GM12878 (cell line): ENCODE measurements at regions of chr10 and their contacts with region 1.

Region 1: DNA sequence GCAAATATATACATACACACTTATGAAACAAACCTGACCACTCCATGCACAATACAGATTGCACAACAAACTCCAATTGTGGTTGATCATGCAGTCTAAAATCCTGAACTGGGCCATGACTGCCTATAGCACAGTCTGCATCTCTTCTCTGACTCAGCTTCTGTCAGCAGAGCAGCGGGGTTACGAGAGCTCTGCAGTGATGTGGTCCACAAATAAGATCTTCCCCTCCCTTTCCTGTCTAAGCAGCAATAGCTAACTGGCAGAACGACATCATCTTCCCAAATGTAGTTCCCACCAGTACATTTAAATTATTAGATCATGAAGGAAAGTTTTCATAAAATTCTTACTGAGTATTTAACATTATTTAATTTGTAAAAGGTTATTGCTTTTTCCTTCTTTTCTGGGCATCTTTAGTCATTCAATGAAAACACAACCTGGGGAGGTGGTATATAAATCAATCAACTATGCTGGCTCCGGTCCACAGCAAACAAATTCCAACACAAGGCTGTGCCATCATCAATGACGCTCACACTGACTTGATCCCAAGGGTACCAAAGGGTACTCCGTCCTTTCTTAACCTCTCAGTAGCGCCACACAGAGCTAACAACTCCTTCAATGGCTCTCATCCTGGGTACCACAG is 17.1 kb downstream of the ARHGAP21 start:
- DNase-seq: no peak
- ATAC-seq: peak; percentile 81
- H3K4me3 ChIP-seq: no peak overlapping the region
- H3K27ac ChIP-seq: no peak overlapping the region
- H3K4me1 ChIP-seq: peaks cover 9% of the 10 kb centered on the region; the same call in 1 of the 2 replicates
- H3K27me3 ChIP-seq: no peaks in the 10 kb centered on the region
- CTCF ChIP-seq: no peak
- EP300 ChIP-seq: no peak
- POLR2A ChIP-seq: no peak
- RAD21 ChIP-seq: no peak

Region 2: GRCh38 chr10:24652381-24652957 is 54.1 kb before region 1 on chr10:
- CTCF ChIA-PET with region 1: interaction called, 3 read pairs
- POLR2A ChIA-PET with region 1: interaction called, 6 read pairs
- RAD21 ChIA-PET with region 1: interaction called, 3 read pairs
- SMC1A ChIA-PET with region 1: interaction called, 14 read pairs
- in situ Hi-C with region 1: no loop called
- intact Hi-C with region 1: loop called (anchors 5 kb)
- DNase-seq: peak; percentile 62
- ATAC-seq: peak; percentile 93
- H3K4me3 ChIP-seq: peak overlapping the region; percentile 46
- H3K27ac ChIP-seq: peak overlapping the region; percentile 76
- H3K4me1 ChIP-seq: peaks cover 15% of the 10 kb centered on the region
- H3K27me3 ChIP-seq: no peaks in the 10 kb centered on the region
- CTCF ChIP-seq: no peak
- EP300 ChIP-seq: peak; percentile 42 to 82; a peak in 3 of 4 replicates
- POLR2A ChIP-seq: no peak
- RAD21 ChIP-seq: no peak

Region 3: DNA sequence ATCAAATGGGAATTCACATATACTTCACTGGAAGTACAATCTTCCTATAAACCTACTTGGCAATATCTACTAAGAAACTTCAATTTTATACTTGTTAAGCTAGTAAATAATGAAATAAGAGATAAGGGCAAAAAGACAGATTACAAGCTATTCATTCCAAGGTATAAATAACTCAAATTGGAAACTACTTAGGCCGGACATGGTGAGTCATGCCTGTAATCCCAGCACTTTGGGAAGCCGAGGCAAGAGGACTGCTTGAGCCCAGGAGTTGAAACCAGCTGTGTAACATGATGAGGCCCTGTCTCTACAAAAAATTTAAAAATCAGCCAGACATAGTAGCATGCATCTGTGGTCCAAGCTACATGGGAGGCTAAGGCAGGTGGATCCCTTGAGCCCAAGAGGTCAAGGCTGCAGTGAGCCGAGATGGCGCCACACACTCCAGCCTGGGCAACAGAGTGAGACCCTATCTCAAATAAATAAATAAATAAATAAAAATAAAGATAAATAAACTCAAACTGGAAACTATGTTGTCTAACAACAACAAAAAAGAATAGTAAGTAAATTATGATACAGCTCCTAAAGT is 20.6 kb before region 1 on chr10:
- CTCF ChIA-PET with region 1: no interaction called
- POLR2A ChIA-PET with region 1: interaction called, 16 read pairs
- RAD21 ChIA-PET with region 1: interaction called, 3 read pairs
- SMC1A ChIA-PET with region 1: interaction called, 40 read pairs
- in situ Hi-C with region 1: no loop called
- intact Hi-C with region 1: no loop called
- DNase-seq: no peak
- ATAC-seq: no peak
- H3K4me3 ChIP-seq: no peak overlapping the region
- H3K27ac ChIP-seq: no peak overlapping the region
- H3K4me1 ChIP-seq: no peaks in the 10 kb centered on the region
- H3K27me3 ChIP-seq: no peaks in the 10 kb centered on the region
- CTCF ChIP-seq: no peak
- EP300 ChIP-seq: no peak
- POLR2A ChIP-seq: no peak
- RAD21 ChIP-seq: no peak

Region 4: DNA sequence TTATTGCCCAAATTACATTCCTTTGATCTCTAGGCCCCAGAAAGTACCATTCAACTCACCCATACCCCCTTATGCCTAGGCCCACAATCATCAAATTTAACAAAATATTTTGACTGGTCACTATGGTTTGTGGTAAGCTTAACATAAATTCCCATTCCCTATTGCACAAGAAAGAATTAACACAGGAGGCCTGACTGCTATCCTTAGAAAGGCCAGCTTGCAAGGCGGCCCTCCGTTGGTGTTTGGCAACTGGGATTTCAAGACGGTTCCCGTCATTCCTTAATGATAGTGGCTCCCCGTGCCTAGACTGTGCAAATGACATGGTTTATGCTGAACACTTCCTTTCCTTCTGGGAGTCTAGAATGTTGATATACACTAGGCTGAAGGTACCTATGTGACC is 12.5 kb before region 1 on chr10:
- CTCF ChIA-PET with region 1: interaction called, 4 read pairs
- POLR2A ChIA-PET with region 1: interaction called, 16 read pairs
- RAD21 ChIA-PET with region 1: interaction called, 6 read pairs
- SMC1A ChIA-PET with region 1: interaction called, 40 read pairs
- in situ Hi-C with region 1: no loop called
- intact Hi-C with region 1: no loop called
- DNase-seq: no peak
- ATAC-seq: no peak
- H3K4me3 ChIP-seq: no peak overlapping the region
- H3K27ac ChIP-seq: no peak overlapping the region
- H3K4me1 ChIP-seq: no peaks in the 10 kb centered on the region
- H3K27me3 ChIP-seq: no peaks in the 10 kb centered on the region
- CTCF ChIP-seq: no peak
- EP300 ChIP-seq: no peak
- POLR2A ChIP-seq: no peak
- RAD21 ChIP-seq: no peak

Region 5: GRCh38 chr10:24718031-24718855 is 11.6 kb after region 1 on chr10:
- CTCF ChIA-PET with region 1: interaction called, 13 read pairs
- POLR2A ChIA-PET with region 1: interaction called, 14 read pairs
- RAD21 ChIA-PET with region 1: interaction called, 11 read pairs
- SMC1A ChIA-PET with region 1: interaction called, 22 read pairs
- in situ Hi-C with region 1: no loop called
- intact Hi-C with region 1: loop called (anchors 2 kb)
- DNase-seq: no peak
- ATAC-seq: no peak
- H3K4me3 ChIP-seq: no peak overlapping the region
- H3K27ac ChIP-seq: no peak overlapping the region
- H3K4me1 ChIP-seq: peaks cover 6% of the 10 kb centered on the region; the same call in 1 of the 2 replicates
- H3K27me3 ChIP-seq: no peaks in the 10 kb centered on the region
- CTCF ChIP-seq: no peak
- EP300 ChIP-seq: no peak
- POLR2A ChIP-seq: no peak
- RAD21 ChIP-seq: no peak